SK-N-SH (cell line): ENCODE measurements at regions of chr6 and their contacts with region 1.

Region 1: DNA sequence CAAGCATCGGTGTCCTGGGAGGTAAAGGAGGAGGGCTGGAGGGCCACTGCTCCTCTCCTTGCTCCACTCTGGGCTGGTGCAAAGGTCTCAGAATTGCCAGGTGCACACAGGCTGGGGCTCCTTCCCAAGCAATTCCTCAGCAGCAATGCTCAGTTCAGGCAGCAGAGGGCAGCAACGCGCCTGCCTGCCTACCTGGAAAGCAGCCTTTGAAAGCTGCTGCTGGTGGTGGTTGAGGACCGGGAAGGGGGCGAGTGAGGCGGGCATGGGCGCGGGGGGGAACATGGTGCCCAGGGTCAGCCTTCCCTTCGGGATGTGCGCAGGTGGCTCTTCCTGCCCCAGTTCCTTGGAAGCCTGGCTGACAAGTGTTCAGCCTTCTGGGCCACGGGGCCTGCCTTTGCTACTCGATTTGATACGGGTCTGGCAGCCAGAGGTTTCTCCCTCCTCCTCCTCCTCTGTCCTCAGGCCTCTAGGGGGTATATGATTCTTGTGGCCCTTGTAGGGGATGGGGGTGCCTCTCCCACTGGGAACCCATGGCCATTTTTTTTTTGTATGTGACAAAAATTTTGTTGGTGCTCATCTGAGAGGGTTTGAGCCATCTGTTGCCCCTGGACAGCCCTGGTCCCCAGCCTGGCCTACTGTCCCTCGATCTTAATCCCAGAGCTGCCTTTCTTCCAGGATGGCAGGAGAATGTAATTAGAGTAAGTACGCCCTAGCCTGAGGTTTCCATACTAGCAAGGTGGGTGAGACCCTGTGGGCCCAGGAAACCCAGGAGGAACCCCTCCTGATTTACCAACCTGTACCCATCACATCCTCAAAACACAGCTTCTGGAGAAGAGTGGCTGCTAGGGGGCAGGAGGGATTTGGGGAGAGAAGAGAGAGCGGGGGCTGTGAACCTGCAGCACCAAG is 20.1 kb downstream of the MRPS18A start:
- DNase-seq: peak; percentile 88
- H3K4me3 ChIP-seq: peak overlapping the region in 1 of 2 experiments; percentile 33; a peak in 2 of 4 replicates
- H3K27ac ChIP-seq: peak overlapping the region in 1 of 2 experiments; percentile 31; a peak in 1 of 4 replicates
- H3K4me1 ChIP-seq: peaks cover 0 to 29% of the 10 kb centered on the region in 2 experiments; a peak in 1 of 4 replicates
- H3K27me3 ChIP-seq: no peaks in the 10 kb centered on the region
- CTCF ChIP-seq: peak; percentile 89
- EP300 ChIP-seq: no peak
- RAD21 ChIP-seq: peak; percentile 86

Region 2: GRCh38 chr6:43608310-43608763 is 59.2 kb before region 1 on chr6:
- CTCF ChIA-PET with region 1: interaction called, 19 read pairs
- POLR2A ChIA-PET with region 1: no interaction called
- DNase-seq: peak; percentile 77
- H3K4me3 ChIP-seq: no peak overlapping the region
- H3K27ac ChIP-seq: no peak overlapping the region
- H3K4me1 ChIP-seq: peaks cover 0 to 10% of the 10 kb centered on the region in 2 experiments; a peak in 2 of 4 replicates
- H3K27me3 ChIP-seq: no peaks in the 10 kb centered on the region
- CTCF ChIP-seq: peak; percentile 88
- EP300 ChIP-seq: no peak
- RAD21 ChIP-seq: peak; percentile 77

Region 3: DNA sequence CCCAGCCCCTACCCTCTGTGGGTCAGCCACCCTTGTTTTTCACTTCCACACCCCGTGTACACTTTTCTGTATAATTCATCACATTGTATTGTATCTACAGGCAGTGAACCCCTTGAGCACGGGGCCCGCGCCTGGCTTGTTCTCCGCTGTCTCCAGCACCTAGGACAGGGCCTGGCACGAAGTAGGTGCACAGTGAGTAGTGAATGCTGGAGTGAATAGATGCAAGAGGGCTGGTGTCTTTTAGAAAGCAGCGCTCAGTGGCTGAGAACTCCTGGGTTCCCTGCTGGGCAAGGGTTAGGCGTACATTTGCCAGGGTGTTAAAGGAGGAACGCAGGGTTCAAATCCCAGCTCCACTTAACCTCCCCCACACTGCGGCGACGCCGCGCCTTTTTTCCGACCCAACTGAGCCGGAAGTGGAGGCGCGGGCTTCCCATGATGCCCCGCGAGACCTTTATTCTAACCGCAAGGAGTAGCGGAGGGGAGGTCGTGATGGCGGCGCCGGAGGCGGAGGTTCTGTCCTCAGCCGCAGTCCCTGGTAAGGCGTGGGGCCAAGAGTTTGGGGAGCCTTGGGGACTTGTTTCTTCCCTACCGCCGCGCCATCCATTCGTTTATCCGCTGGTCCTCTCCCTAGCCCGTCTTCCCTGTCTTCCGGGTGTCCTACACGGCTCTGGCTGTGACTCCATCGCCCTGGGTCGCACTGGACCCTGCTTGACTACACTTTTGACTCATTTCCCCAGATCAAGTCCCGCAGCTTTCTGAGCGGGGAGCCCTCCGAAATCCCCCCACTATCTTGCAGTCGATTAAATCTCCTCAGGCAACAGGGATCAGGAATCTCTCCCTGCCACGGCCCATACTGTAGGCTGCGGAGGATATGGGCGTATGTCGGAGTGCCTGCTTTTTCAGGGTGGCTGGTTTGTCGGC is 31.9 kb before region 1 on chr6 and contains the start of gene MAD2L1BP:
- CTCF ChIA-PET with region 1: interaction called, 11 read pairs
- POLR2A ChIA-PET with region 1: interaction called, 3 read pairs
- DNase-seq: peak; percentile 86
- H3K4me3 ChIP-seq: peak within 1 kb of the TSS; percentile 70 to 79
- H3K27ac ChIP-seq: peak within 1 kb of the TSS; percentile 52 to 83; a peak in 3 of 4 replicates
- H3K4me1 ChIP-seq: peaks cover 24 to 26% of the 10 kb centered on the region in 2 experiments; a peak in 3 of 4 replicates
- H3K27me3 ChIP-seq: no peaks in the 10 kb centered on the region
- CTCF ChIP-seq: no peak
- EP300 ChIP-seq: no peak
- RAD21 ChIP-seq: no peak
- polyA plus RNA-seq, gene MAD2L1BP: 30.9 and 42.2 TPM in 2 replicates

Region 4: DNA sequence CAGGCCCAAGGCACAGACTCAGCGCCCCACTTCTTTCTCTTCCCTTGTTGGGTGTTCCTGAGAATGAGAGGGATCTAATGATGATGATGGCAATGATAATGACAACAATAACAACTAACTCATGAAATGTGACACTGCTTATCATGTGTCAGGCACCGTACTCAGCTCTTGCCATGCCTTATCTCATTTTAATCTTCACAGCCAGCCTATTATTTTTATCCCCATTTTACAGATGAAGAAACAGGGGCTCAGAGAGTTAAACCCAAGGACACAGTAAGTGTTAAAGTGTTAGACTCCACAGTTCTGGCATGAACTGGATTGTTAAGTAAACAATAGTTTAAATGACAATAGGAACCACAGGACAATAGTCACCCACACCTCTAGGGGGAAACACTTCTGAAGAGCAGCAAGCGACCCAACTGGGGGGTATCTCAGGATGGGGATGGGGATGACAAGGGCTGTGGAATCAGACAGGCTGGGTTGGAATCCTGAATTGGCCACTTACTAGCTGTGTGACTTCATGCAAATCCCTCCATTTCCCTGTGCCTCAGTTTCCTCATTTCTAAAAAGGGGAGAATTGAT is 10.2 kb before region 1 on chr6:
- CTCF ChIA-PET with region 1: interaction called, 25 read pairs
- POLR2A ChIA-PET with region 1: interaction called, 3 read pairs
- DNase-seq: no peak
- H3K4me3 ChIP-seq: no peak overlapping the region
- H3K27ac ChIP-seq: no peak overlapping the region
- H3K4me1 ChIP-seq: no peaks in the 10 kb centered on the region
- H3K27me3 ChIP-seq: no peaks in the 10 kb centered on the region
- CTCF ChIP-seq: no peak
- EP300 ChIP-seq: no peak
- RAD21 ChIP-seq: no peak

Region 5: DNA sequence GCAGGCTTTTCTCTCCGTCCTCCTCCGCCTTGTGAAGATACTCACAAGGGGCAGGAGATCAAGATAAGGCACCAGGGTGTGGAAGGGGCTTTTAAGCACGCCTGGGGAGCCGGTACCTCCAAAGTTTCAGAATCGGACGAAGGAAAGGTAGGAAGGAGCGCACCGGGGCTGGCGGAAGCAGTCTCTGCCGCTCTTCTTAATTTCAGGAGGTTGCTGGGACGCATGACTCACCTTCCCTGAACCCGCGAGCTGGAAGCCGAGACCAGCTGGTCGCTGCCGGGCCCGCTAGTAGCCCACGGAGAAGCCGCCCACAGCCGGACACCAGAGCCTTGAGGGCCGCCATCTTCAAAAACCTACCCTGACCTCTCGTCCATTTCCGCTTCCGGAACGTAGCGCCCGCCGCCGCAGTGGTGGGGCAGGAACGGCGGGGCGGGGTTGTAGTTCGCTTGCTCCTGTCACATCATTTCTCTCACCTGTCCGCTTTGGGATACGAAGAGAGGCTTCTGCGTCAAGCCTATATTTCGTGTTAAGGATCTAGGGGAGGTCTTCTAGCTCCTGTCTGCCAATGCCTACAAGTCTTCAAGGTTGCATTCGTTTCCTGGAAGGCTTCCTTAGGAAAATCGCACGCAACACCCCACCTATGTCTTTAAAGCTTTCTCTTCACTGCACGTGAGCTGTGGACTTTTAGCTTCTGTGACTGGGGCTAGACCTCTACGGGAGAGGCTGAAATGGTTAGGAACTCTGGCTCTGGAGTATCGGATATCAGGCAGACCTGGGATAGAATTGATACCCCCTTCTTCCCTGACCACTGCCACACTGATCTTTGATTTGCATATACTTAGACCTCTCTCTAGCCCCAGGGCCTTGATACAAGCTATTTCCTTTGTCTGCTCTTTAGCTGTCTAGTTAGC is 20.2 kb after region 1 on chr6 and contains the start of gene MRPS18A:
- CTCF ChIA-PET with region 1: interaction called, 25 read pairs
- POLR2A ChIA-PET with region 1: no interaction called
- DNase-seq: peak; percentile 90
- H3K4me3 ChIP-seq: peak within 1 kb of the TSS; percentile 82 to 98
- H3K27ac ChIP-seq: peak within 1 kb of the TSS; percentile 44 to 67; a peak in 3 of 4 replicates
- H3K4me1 ChIP-seq: peaks cover 0 to 17% of the 10 kb centered on the region in 2 experiments; a peak in 2 of 4 replicates
- H3K27me3 ChIP-seq: no peaks in the 10 kb centered on the region
- CTCF ChIP-seq: no peak
- EP300 ChIP-seq: peak in 1 of 2 experiments; percentile 20; a peak in 1 of 4 replicates
- RAD21 ChIP-seq: no peak
- polyA plus RNA-seq, gene MRPS18A: 56.9 and 57.0 TPM in 2 replicates

Region 6: DNA sequence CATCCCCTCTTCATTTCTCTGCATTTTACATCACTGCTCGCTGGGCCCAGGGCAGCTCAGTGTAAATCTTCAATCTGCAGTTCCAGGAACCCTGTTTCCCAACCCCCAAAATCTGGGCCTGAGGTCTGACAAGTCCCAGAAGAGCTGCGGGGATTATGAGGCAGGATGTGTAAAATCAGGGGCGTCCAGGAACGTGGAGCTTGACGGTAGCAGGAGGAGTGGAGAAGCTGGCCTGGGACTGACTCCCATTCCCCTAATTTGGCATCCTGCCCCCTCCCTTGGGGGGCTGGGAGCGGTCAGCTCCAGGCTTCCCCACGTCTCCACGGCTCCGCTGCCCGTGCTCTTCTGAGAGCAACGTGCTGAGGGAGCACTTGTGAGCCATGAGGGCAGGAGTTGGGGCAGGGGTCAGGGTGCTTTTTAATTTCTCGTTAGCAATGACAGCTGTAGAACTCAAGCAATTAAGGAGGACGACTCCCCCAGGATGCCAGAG is 79.2 kb after region 1 on chr6:
- CTCF ChIA-PET with region 1: interaction called, 28 read pairs
- POLR2A ChIA-PET with region 1: no interaction called
- DNase-seq: peak; percentile 17
- H3K4me3 ChIP-seq: no peak overlapping the region
- H3K27ac ChIP-seq: no peak overlapping the region
- H3K4me1 ChIP-seq: no peaks in the 10 kb centered on the region; a peak in 1 of 4 replicates
- H3K27me3 ChIP-seq: 0 out of 2 replicates have a peak, but pooled peaks cover 4% of the 10 kb centered on the region
- CTCF ChIP-seq: no peak
- EP300 ChIP-seq: no peak
- RAD21 ChIP-seq: no peak